Endothelial cell of umbilical vein (primary cell): ENCODE measurements at regions of chr10 and their contacts with region 1.

Region 1: DNA sequence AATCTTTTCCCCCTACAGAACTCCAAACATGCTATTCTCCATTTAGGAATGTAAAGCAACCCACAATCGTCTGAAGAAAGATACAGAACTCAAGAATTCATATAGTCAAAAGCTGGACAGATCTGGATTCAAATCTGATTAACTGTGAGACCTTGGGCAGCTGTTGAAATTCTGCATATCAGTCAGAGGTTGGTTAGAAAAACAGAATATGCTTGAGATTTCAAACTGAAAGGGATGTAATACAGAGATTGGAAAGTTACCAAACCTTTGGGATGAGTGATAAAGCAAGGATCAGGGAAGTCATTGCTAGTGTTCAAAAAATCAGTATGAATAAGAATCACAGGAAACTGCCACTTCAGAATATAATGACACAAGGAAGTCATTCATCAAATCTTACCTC is 406.6 kb downstream of the HTR7 start:
- DNase-seq: peak; percentile 60
- H3K4me3 ChIP-seq: no peak overlapping the region
- H3K27ac ChIP-seq: no peak overlapping the region
- H3K4me1 ChIP-seq: peaks cover 17% of the 10 kb centered on the region
- H3K27me3 ChIP-seq: peaks cover 0 to 4% of the 10 kb centered on the region in 2 experiments
- CTCF ChIP-seq: no peak
- POLR2A ChIP-seq: no peak

Region 2: GRCh38 chr10:90430186-90430585 is 21.1 kb before region 1 on chr10:
- CTCF ChIA-PET with region 1: interaction called, 3 read pairs
- POLR2A ChIA-PET with region 1: no interaction called
- dilution Hi-C with region 1: no loop called
- intact Hi-C with region 1: loop called (anchors 2 kb)
- DNase-seq: peak; percentile 55
- H3K4me3 ChIP-seq: no peak overlapping the region
- H3K27ac ChIP-seq: no peak overlapping the region
- H3K4me1 ChIP-seq: no peaks in the 10 kb centered on the region
- H3K27me3 ChIP-seq: no peaks in the 10 kb centered on the region
- CTCF ChIP-seq: no peak
- POLR2A ChIP-seq: no peak

Region 3: DNA sequence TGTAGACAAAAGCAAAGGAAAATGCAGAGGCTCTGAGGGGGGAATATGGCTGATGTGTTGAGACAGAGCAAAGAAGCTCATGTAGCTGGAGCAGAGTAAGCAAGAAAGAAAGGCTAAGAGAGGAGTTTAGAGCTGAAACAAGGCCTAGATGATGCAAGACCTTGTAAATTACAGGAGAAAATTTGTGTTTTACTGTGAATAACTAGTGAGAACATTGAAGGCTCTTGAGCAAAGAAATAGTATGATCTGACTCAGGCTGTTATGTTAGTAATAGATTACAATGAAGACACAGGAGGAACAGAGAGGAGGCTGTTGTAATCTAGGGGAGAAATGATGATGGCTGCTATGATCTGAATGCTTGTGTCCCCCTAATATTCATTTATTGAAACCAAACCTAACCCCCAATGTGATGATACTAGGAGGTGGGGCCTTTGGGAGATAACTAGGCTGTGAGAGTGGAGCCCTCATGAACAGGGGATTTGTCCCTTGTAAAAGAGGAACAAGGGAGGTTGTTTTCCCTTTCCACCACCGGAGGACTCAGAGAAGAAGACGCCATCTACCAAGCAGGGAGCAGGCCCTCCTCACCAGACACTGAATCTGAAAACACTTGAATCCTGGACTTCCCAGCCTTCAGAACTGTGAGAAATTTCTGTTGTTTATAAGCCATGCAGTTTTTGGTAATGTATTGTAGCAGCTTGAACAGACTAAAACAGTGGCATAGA is 11.6 kb after region 1 on chr10:
- CTCF ChIA-PET with region 1: interaction called, 3 read pairs
- POLR2A ChIA-PET with region 1: no interaction called
- dilution Hi-C with region 1: no loop called
- intact Hi-C with region 1: loop called (anchors 1 kb)
- DNase-seq: no peak
- H3K4me3 ChIP-seq: no peak overlapping the region
- H3K27ac ChIP-seq: no peak overlapping the region
- H3K4me1 ChIP-seq: peaks cover 3% of the 10 kb centered on the region
- H3K27me3 ChIP-seq: peaks cover 2 to 8% of the 10 kb centered on the region in 2 experiments
- CTCF ChIP-seq: no peak
- POLR2A ChIP-seq: no peak